ENCODE measurements at regions of chr11 and their contacts with region 1.

Region 1: DNA sequence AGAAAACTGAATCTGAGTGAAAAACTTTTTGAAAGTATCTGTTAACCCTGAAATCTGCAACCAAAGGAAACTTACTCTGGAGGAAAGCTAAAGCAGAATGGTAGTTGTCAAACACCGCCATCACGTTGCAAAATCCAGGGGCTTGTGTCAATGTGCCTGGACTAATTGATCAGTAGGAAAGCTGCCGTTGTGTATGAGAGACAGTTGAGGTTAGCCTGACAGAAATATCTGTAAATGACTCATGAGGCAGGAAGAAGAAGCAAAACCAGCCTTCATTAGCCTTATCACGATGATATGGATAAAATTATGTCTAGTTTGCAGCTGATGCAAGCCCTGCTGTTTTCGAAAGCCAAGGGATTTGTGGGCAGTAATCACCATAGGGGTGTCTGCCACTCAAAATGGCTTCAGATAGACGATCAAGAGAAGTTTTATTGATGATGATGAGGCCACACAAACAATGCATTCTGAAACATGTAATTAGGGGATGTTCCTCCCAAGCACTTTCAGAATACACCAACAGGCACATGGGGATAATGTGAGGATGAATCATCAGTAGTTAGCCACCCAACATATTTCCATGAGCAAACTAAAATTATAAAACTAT is 8.9 kb downstream of the SCGB1A1 start:
- DNase-seq: no peak
- H3K4me3 ChIP-seq: no peak overlapping the region
- H3K27ac ChIP-seq: peak overlapping the region in 5 of 8 donors; percentile 3 to 63 (median 33)
- H3K4me1 ChIP-seq: peaks cover 0 to 74% (median 21%) of the 10 kb centered on the region in 6 donors
- H3K27me3 ChIP-seq: peaks cover 0 to 9% (median 0%) of the 10 kb centered on the region in 7 donors
- CTCF ChIP-seq: no peak
- POLR2A ChIP-seq: no peak

Region 2: GRCh38 chr11:61860054-61860903 is 567.5 kb before region 1 on chr11:
- intact Hi-C with region 1: no loop called
- DNase-seq: no peak
- H3K4me3 ChIP-seq: no peak overlapping the region
- H3K27ac ChIP-seq: no peak overlapping the region
- H3K4me1 ChIP-seq: peaks cover 0 to 15% (median 0%) of the 10 kb centered on the region in 6 donors
- H3K27me3 ChIP-seq: no peaks in the 10 kb centered on the region
- CTCF ChIP-seq: no peak
- POLR2A ChIP-seq: no peak

Region 3: GRCh38 chr11:62694455-62695167 is 266.9 kb after region 1 on chr11:
- intact Hi-C with region 1: loop called (anchors 10 kb)
- DNase-seq: peak; percentile 90
- H3K4me3 ChIP-seq: no peak overlapping the region
- H3K27ac ChIP-seq: no peak overlapping the region
- H3K4me1 ChIP-seq: peaks cover 0 to 9% (median 6%) of the 10 kb centered on the region in 6 donors
- H3K27me3 ChIP-seq: no peaks in the 10 kb centered on the region
- CTCF ChIP-seq: peak; percentile 51 to 92 (median 81)
- POLR2A ChIP-seq: no peak

Measured in spleen (tissue), 13 donors.